ENCODE measurements at regions of chr6 and their contacts with region 1.

Region 1: DNA sequence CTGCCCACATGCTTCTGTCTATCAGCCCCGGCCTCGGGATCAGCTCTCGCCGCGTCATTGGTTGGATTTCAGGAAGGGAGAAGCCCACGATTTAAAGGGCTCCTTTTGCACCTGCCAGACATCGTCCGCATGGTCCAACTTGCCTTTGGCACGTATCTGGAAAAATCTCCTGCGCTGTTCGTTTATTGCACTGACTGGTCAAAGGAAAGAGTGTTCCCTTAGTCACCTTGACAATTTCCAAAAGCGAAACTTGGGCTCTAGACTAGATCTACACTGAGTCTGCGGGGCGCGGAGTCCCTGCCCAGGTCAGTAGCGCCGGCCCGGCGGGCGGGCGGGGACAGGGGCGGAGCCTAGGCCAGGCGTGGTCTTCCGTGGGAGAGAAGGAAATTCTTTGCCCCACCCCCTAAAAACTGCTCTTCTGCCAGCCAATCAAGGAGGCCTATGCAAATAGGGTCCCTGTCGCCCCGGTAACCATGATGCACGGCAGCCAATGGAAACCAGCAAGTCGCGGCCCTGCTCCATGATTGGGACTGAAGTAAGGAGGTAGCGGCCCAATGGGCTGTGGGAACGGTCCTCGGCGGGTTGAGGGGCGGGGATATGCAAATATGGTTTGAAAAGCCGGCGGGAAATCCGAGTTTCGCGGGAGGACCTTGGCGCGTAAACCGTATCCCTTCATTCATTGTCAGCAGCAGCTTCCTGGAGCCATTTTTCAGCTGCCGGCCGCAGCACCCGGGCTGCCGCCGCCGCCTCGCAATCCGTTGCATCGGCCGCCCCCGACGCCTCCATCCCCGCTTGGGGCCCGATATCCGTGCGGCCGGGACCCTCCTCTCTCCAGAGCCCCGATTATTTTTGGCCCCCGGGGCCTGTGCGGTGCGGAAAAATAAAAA is at the start of gene E2F3:
- DNase-seq: peak; percentile 100
- H3K4me3 ChIP-seq: peak within 1 kb of the TSS; percentile 59 to 91 (median 82)
- H3K27ac ChIP-seq: peak within 1 kb of the TSS; percentile 80 to 96 (median 87)
- H3K4me1 ChIP-seq: peaks cover 0 to 19% (median 13%) of the 10 kb centered on the region in 4 donors
- H3K27me3 ChIP-seq: no peaks in the 10 kb centered on the region
- CTCF ChIP-seq: no peak
- EP300 ChIP-seq: no peak
- POLR2A ChIP-seq: peak in 1 of 2 donors; percentile 31
- total RNA-seq, gene E2F3: 2.5 to 4.7 (median 3.2) TPM

Region 2: GRCh38 chr6:20092071-20092566 is 309.3 kb before region 1 on chr6:
- intact Hi-C with region 1: loop called (anchors 10 kb)
- DNase-seq: no peak
- H3K4me3 ChIP-seq: no peak overlapping the region
- H3K27ac ChIP-seq: no peak overlapping the region
- H3K4me1 ChIP-seq: peaks cover 0 to 10% (median under 1%) of the 10 kb centered on the region in 4 donors
- H3K27me3 ChIP-seq: no peaks in the 10 kb centered on the region
- CTCF ChIP-seq: peak; percentile 63 to 83 (median 70)
- EP300 ChIP-seq: no peak
- POLR2A ChIP-seq: no peak

Region 3: DNA sequence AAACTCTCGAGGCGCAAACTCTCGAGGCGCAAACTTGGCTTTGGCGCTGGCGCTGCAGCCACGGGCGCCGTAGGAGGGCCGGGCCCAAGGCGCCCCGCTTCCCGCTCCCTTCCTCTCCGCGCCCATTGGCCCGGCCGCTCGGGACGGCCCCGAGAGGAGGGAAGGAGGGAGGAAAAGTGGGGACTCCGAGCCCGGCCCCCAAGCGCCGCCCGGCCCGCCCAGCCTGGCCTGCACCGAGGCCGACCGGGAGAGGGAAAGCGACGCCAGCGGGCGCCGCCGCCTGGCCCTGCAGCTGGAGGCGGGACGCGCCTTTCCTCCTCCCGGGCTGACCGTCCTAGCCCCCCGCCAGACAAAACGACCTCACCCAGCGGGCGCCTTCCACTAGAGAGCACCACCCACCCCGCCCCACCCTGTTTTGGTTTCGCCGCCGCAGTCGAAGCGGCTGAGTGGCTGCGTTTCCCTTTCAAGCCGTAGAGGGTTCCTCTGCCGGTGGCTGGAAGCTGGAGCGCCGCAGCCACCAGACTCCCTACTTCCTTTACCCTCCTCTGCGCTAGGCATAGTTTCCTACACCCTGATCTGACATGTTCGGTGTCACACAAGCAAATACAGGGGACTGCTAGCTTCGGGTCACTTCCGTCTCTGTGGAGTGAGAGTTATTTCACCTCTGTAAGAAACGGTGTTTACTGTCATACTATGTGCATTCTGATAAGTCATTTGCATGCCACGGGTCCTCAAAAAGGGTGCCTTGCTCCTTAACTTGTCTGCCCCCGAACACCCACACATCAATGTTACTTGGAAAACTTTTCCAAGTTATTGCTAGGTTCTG is 188.8 kb before region 1 on chr6 and contains the start of gene MBOAT1:
- intact Hi-C with region 1: loop called (anchors 5 kb)
- DNase-seq: peak; percentile 96
- H3K4me3 ChIP-seq: peak within 1 kb of the TSS; percentile 76 to 91 (median 84)
- H3K27ac ChIP-seq: peak within 1 kb of the TSS; percentile 88 to 94 (median 90)
- H3K4me1 ChIP-seq: peaks cover 0 to 62% (median 44%) of the 10 kb centered on the region in 4 donors
- H3K27me3 ChIP-seq: no peaks in the 10 kb centered on the region
- CTCF ChIP-seq: no peak
- EP300 ChIP-seq: no peak
- POLR2A ChIP-seq: peak; percentile 38 to 65
- total RNA-seq, gene MBOAT1: 6.9 to 15.6 (median 11.0) TPM

Region 4: DNA sequence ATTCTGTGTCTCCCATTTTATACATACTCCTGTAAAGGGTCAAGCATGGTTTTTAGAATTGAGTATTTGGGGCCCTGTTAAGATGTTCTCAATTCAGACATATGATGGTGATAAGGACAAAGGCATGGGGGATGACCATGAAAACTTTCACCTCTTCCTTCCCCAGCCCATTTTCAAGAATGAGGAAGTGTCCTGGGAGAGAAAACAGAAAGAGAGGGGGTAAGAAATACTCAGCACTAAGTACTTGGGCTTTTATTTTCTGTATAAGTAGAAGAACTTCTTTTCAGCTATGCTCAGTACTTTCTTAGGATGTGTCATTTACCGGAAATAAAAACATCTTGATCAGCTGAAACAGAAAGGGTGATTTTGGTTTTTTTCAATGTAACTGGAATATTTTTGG is 178.3 kb before region 1 on chr6:
- intact Hi-C with region 1: no loop called
- DNase-seq: no peak
- H3K4me3 ChIP-seq: no peak overlapping the region
- H3K27ac ChIP-seq: peak overlapping the region in 3 of 4 donors; percentile 50 to 72 (median 70)
- H3K4me1 ChIP-seq: peaks cover 0 to 27% (median 12%) of the 10 kb centered on the region in 4 donors
- H3K27me3 ChIP-seq: no peaks in the 10 kb centered on the region
- CTCF ChIP-seq: no peak
- EP300 ChIP-seq: no peak
- POLR2A ChIP-seq: no peak

Region 5: GRCh38 chr6:20291764-20292580 is 109.5 kb before region 1 on chr6:
- intact Hi-C with region 1: loop called (anchors 5 kb)
- DNase-seq: peak; percentile 84
- H3K4me3 ChIP-seq: no peak overlapping the region
- H3K27ac ChIP-seq: no peak overlapping the region
- H3K4me1 ChIP-seq: peaks cover 0 to 6% (median 0%) of the 10 kb centered on the region in 4 donors
- H3K27me3 ChIP-seq: no peaks in the 10 kb centered on the region
- CTCF ChIP-seq: peak; percentile 75 to 95 (median 88)
- EP300 ChIP-seq: no peak
- POLR2A ChIP-seq: no peak

Region 6: DNA sequence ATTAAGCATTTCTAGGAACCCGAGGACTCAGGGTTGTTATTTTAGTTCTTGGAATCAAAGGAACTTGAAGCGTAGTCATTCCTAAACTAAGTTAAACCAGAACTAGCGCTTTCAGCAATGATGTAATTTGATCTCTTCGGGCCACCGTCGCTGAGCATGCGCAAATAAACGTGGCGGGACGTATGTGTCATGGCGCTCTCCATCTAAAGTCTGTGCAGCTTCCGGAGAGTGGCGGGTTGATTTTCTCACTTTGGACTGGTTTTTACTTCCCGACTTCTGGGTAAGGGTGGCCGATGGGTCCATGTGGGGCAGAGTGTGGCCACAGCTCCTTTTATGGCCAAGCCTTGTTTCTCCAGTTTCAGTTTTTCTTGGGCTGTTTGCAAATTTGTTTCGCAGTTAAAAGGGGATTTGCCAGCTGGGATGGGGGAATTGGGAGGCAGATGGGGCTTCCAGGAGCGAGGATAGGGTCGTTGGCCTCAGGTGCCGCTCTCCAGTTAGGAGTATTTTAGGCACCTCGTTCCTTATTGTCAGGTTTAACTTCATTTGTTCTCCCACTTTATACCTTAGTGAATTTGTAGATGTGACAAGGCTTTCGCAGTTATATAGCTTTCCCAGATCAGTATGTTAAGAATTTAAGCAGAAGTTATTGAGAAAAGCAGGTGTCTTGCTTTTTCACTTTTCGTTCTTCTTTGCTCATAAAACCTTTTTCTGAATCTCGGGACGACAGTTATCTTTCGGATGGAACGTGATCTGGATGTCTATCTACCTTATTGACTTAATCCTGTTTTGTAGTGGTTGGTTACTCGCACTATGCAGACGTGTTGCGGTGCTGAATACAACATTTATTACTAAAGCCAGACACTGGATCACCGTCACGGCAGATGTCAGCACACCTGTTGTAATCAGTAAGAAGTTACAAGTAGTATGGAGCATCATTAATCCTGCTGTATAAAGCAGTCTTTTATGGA is 133.1 kb after region 1 on chr6 and contains the start of gene CDKAL1:
- intact Hi-C with region 1: loop called (anchors 2 kb)
- DNase-seq: peak; percentile 95
- H3K4me3 ChIP-seq: peak within 1 kb of the TSS; percentile 72 to 79 (median 78)
- H3K27ac ChIP-seq: peak within 1 kb of the TSS; percentile 86 to 90 (median 88)
- H3K4me1 ChIP-seq: peaks cover 0 to 27% (median 15%) of the 10 kb centered on the region in 4 donors
- H3K27me3 ChIP-seq: no peaks in the 10 kb centered on the region
- CTCF ChIP-seq: no peak
- EP300 ChIP-seq: no peak
- POLR2A ChIP-seq: peak in 1 of 2 donors; percentile 20
- total RNA-seq, gene CDKAL1: 11.4 to 14.7 (median 13.6) TPM

Measured in sigmoid colon (tissue), 7 donors.